Activated CD8-positive, alpha-beta T cell treated with anti-CD3 and anti-CD28 coated beads, Interleukin-2, amount 10 ng/mL, durations not matched to agents 7 days and 5 days (primary cell): ENCODE measurements at regions of chr15 and their contacts with region 1.

Region 1: GRCh38 chr15:90101969-90102890 is at the start of gene IDH2:
- DNase-seq: peak; percentile 75
- ATAC-seq: peak; percentile 85
- H3K4me3 Mint-ChIP-seq: peak within 1 kb of the TSS; percentile 93
- H3K27ac Mint-ChIP-seq: peak within 1 kb of the TSS; percentile 99
- H3K4me1 Mint-ChIP-seq: peaks cover 54% of the 10 kb centered on the region
- H3K27me3 Mint-ChIP-seq: peaks cover 5% of the 10 kb centered on the region
- total RNA-seq, gene IDH2: 291 to 301 TPM

Region 2: DNA sequence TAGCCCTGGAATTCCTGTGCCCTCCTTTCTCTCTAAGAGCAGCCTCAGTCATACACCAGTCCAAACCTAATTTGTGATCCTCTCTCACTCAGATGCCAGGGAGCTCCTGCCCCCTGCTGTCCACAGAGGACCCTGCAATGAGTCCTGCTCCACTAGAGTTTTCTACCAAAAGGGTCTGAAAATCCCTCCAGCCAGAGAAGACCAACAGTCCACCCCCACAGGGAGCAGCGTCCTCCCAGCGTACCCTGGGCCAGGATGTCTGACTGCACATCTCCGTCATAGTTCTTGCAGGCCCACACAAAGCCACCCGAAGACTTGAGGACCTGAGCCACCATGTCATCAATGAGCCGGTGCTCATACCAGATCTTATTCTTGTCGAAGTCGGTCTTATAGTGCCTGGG is 15.4 kb before region 1 on chr15:
- CTCF ChIA-PET with region 1: interaction called, 40 read pairs
- POLR2A ChIA-PET with region 1: interaction called, 3 read pairs
- DNase-seq: peak; percentile 70
- ATAC-seq: peak; percentile 73
- H3K4me3 Mint-ChIP-seq: no peak overlapping the region
- H3K27ac Mint-ChIP-seq: peak overlapping the region; percentile 63
- H3K4me1 Mint-ChIP-seq: peaks cover 15% of the 10 kb centered on the region
- H3K27me3 Mint-ChIP-seq: no peaks in the 10 kb centered on the region

Region 3: DNA sequence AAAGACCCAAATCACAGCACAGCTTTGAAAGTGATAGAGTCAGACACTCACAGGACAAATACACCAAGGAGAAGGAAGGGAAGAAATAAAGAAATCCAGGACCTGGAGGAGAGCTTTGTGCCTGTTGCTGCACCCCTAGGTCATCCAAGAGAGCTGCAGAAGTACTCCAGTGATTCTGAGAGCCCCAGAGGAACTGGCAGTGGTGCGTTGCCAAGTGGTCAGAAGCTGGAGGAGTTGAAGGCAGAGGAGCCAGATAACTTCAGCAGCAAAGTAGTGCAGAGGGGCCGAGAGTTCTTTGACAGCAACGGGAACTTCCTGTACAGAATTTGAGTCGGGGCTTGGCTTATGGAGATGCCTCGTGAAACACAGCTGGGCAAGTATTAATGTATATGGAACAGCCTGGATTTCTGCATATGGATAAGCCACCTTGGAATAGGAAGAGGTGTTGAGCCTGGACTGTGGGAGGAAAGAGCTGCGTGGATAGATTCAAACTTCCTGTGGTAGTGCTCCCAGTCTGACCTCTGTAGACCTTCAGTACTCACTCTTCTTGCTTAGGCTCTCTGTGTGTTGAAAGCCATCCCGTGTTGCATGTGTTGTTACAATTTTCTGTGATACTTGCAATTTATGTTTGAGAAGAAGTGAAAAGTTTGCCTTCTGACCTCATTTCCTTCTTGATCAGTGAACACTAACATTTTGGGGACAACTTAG is 169.4 kb after region 1 on chr15:
- CTCF ChIA-PET with region 1: no interaction called
- POLR2A ChIA-PET with region 1: no interaction called
- DNase-seq: no peak
- ATAC-seq: no peak
- H3K4me3 Mint-ChIP-seq: no peak overlapping the region
- H3K27ac Mint-ChIP-seq: peak overlapping the region; percentile 39
- H3K4me1 Mint-ChIP-seq: peaks cover 42% of the 10 kb centered on the region
- H3K27me3 Mint-ChIP-seq: no peaks in the 10 kb centered on the region